ENCODE measurements at regions of chr6 and their contacts with region 1.

Region 1: DNA sequence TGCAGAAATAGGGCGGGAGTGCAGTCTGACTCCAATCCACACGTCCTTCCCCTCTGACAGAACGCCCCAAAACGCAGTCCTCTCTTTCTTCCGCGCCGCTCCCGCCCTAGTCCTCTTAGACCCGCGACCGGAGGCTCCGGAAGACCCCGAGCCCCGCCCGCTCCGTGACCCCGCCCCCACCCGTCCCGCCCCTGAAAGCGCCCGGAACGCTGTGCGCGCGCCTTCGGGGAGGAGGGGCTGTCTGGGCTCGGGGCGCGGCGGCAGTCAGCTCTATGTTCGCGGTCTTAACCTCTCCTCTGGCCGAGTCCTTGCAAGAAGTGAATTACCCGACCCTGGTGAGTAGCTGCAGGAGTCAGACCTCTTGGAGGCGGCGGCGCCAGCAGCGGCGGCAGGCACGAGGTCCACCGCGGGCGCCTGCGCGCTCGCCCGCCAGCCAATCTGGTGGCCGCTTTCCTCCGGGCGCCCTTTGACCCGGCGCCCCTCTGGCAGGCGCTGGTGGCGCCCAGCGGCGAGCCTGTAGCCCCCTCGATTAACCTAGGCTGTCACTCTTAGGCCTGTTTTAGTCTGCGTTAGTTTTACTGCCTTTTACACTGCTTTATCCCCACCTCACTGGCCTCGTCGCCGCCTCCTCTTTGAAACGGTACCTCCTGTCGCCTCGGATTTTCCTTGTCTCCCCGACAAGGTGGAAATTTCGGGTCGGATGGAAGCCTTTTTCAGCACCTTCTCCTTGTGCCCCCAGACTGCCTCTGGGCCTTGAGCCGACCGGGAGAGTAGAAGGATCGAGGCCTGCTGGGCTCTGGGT is at the start of gene MANEA:
- DNase-seq: peak; percentile 78
- H3K4me3 Mint-ChIP-seq: peak within 1 kb of the TSS; percentile 93
- H3K27ac Mint-ChIP-seq: peak within 1 kb of the TSS; percentile 96
- H3K4me1 Mint-ChIP-seq: peaks cover 15% of the 10 kb centered on the region
- H3K27me3 Mint-ChIP-seq: no peaks in the 10 kb centered on the region
- CTCF ChIP-seq: no peak
- total RNA-seq, gene MANEA: 12.4 and 22.6 TPM in 2 replicates

Region 2: GRCh38 chr6:95364016-95364604 is 213.4 kb before region 1 on chr6:
- CTCF ChIA-PET with region 1: no interaction called
- intact Hi-C with region 1: loop called (anchors 10 kb)
- DNase-seq: no peak
- H3K4me3 Mint-ChIP-seq: no peak overlapping the region
- H3K27ac Mint-ChIP-seq: no peak overlapping the region
- H3K4me1 Mint-ChIP-seq: peaks cover 8% of the 10 kb centered on the region
- H3K27me3 Mint-ChIP-seq: no peaks in the 10 kb centered on the region
- CTCF ChIP-seq: no peak

Region 3: DNA sequence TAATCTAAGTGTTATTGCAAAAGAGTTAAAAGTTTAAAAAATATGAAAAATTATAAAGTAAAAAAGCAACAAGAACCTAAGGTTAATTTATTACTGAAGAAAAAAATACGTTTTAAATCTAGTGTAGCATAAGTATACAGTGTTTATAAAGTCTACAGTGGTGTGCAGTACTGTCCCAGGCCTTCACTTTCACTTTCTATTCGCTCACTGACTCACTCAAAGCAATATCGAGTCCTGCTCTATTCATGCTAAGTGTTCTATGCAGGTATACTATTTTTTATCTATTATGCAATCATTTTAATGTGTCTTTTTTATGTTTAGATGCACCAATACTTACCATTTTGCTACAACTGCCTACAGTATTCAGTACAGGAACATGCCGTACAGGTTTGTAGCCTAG is 112.8 kb after region 1 on chr6:
- CTCF ChIA-PET with region 1: no interaction called
- intact Hi-C with region 1: loop called (anchors 5 kb)
- DNase-seq: no peak
- H3K4me3 Mint-ChIP-seq: peak overlapping the region; percentile 36
- H3K27ac Mint-ChIP-seq: no peak overlapping the region
- H3K4me1 Mint-ChIP-seq: peaks cover 11% of the 10 kb centered on the region
- H3K27me3 Mint-ChIP-seq: no peaks in the 10 kb centered on the region
- CTCF ChIP-seq: no peak

Measured in Calu3 (cell line).